ENCODE measurements at regions of chrX and their contacts with region 1.

Region 1: DNA sequence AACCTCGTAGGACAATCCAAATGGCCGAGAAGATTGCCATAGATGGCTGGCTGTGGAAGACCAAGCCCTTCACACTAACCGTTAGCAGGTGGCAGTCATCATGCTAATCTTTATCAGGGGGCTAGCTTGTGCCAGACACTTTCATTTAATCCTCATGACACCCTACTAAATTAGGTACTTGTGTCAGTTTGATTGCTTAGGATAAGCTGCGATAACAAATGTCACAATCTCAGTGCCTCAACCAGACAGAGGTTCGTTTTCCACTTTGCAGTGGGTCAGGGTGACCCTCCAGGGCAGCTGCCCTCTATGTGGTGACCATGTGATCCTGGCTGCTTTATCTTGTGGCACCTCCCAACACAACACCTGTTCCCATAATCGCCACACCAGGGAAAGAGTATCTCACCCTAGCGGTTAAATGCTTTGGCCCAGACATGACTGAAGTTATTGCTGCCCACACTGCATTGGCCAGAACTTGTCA is 60.8 kb downstream of the REPS2 start:
- DNase-seq: no peak
- H3K4me3 ChIP-seq: no peak overlapping the region
- H3K27ac ChIP-seq: no peak overlapping the region
- H3K4me1 ChIP-seq: no peaks in the 10 kb centered on the region
- H3K27me3 ChIP-seq: no peaks in the 10 kb centered on the region
- CTCF ChIP-seq: peak; percentile 24 to 45 (median 35); a peak in 3 of 4 replicates
- EP300 ChIP-seq: no peak
- POLR2A ChIP-seq: no peak
- RAD21 ChIP-seq: peak; percentile 18 to 36; a peak in 3 of 4 replicates

Region 2: GRCh38 chrX:16953606-16954220 is 53.5 kb before region 1 on chrX:
- CTCF ChIA-PET with region 1: no interaction called
- POLR2A ChIA-PET with region 1: no interaction called
- DNase-seq: no peak
- H3K4me3 ChIP-seq: no peak overlapping the region
- H3K27ac ChIP-seq: no peak overlapping the region
- H3K4me1 ChIP-seq: peaks cover 0 to 6% (median 4%) of the 10 kb centered on the region in 4 experiments; a peak in 3 of 7 replicates
- H3K27me3 ChIP-seq: no peaks in the 10 kb centered on the region
- CTCF ChIP-seq: no peak
- EP300 ChIP-seq: no peak
- POLR2A ChIP-seq: no peak
- RAD21 ChIP-seq: no peak

Region 3: GRCh38 chrX:16993791-16994318 is 13.4 kb before region 1 on chrX:
- CTCF ChIA-PET with region 1: interaction called, 14 read pairs
- POLR2A ChIA-PET with region 1: no interaction called
- DNase-seq: no peak
- H3K4me3 ChIP-seq: no peak overlapping the region
- H3K27ac ChIP-seq: no peak overlapping the region
- H3K4me1 ChIP-seq: no peaks in the 10 kb centered on the region
- H3K27me3 ChIP-seq: no peaks in the 10 kb centered on the region
- CTCF ChIP-seq: peak in 2 of 3 experiments; percentile 29 to 59; a peak in 2 of 4 replicates
- EP300 ChIP-seq: no peak
- POLR2A ChIP-seq: no peak
- RAD21 ChIP-seq: no peak; a peak in 1 of 4 replicates